GM18951 (cell line): ENCODE measurements at regions of chr16 and their contacts with region 1.

Region 1: DNA sequence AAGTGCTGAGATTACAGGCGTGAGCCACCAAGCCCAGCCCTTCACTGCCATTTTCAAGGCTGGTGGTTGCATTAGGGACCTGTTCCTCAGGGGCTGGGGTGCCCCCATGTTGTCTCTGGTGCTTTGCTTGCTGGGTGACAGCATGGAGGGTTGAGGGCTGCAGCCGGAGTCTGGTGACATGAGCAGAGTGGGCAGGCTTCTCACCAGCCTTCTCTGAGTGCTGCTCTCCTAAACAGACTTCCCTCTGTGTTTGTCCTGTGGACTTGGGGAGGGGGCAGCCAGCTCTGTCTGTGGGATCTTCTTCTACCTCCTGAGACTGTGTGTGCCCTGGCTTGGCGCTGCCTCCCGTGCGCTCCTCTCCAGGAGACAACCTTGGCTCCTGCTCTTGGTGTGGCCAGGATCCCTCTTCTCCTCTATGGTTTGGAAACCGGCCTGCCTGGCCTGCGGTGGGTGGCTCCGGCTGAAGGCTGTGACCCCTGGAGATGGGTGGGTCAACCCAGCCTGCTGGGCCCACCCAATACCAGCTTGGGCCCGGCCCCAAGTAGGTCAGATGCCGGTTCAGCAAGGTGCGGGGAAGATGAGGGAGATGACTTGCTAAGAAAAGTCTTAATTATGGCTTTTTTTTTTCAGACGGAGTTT is 72.1 kb downstream of the PDPK1 start:
- POLR2A ChIP-seq: no peak

Region 2: DNA sequence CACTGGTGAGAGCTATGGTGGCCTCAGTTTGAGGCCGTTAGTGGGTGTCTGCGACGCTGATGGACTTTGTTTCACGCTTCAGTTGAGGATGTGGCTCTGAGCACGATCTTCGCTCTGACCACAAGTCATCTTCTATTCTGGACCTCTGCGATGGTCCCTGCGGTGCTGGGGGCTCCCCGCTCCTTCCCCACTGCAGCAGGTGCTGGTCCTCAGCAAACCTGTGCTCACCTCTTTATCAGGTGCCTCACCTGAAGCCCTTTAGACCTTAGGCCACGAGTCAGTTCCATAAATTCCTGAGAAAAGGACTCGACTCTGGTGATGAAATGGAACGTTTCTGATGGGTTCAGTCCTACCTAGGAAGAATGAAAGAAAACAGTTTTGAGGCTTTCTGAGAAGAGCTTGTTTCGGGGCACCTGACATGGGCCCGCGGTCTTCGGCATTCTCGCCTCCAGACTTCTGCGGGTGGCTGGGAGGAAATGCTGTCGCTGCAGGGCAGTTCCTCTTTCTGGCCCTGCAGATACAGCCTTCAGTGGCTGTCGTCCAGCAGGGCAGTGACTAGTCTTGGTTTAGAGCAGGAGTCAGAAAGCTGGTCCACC is 77.1 kb after region 1 on chr16:
- in situ Hi-C with region 1: loop called (anchors 5 kb)
- POLR2A ChIP-seq: peak; percentile 28